B cell (primary cell): ENCODE measurements at regions of chr3 and their contacts with region 1.

Region 1: GRCh38 chr3:50611464-50612233 is at the start of gene CISH:
- DNase-seq: peak; percentile 92
- ATAC-seq: peak; percentile 76
- H3K4me3 ChIP-seq: peak within 1 kb of the TSS; percentile 30 to 86 (median 76)
- H3K4me3 Mint-ChIP-seq: peak within 1 kb of the TSS; percentile 90
- H3K27ac ChIP-seq: peak within 1 kb of the TSS; percentile 11 to 65
- H3K27ac Mint-ChIP-seq: peak within 1 kb of the TSS; percentile 80
- H3K4me1 ChIP-seq: peaks cover 24 to 37% of the 10 kb centered on the region in 2 donors
- H3K4me1 Mint-ChIP-seq: peaks cover 42% of the 10 kb centered on the region
- H3K27me3 ChIP-seq: no peaks in the 10 kb centered on the region
- H3K27me3 Mint-ChIP-seq: no peaks in the 10 kb centered on the region
- CTCF ChIP-seq: peak; percentile 61
- total RNA-seq, gene CISH: 2.3 and 2.4 TPM in 2 replicates

Region 2: GRCh38 chr3:50436114-50436674 is 175.5 kb before region 1 on chr3:
- CTCF ChIA-PET with region 1: interaction called, 5 read pairs
- POLR2A ChIA-PET with region 1: no interaction called
- intact Hi-C with region 1: loop called (anchors 5 kb)
- DNase-seq: peak; percentile 73
- ATAC-seq: peak; percentile 68
- H3K4me3 ChIP-seq: no peak overlapping the region
- H3K4me3 Mint-ChIP-seq: no peak overlapping the region
- H3K27ac ChIP-seq: no peak overlapping the region
- H3K27ac Mint-ChIP-seq: no peak overlapping the region
- H3K4me1 ChIP-seq: no peaks in the 10 kb centered on the region
- H3K4me1 Mint-ChIP-seq: no peaks in the 10 kb centered on the region
- H3K27me3 ChIP-seq: peaks cover 0 to 8% (median 1%) of the 10 kb centered on the region in 4 experiments
- H3K27me3 Mint-ChIP-seq: peaks cover 12% of the 10 kb centered on the region
- CTCF ChIP-seq: peak; percentile 80

Region 3: DNA sequence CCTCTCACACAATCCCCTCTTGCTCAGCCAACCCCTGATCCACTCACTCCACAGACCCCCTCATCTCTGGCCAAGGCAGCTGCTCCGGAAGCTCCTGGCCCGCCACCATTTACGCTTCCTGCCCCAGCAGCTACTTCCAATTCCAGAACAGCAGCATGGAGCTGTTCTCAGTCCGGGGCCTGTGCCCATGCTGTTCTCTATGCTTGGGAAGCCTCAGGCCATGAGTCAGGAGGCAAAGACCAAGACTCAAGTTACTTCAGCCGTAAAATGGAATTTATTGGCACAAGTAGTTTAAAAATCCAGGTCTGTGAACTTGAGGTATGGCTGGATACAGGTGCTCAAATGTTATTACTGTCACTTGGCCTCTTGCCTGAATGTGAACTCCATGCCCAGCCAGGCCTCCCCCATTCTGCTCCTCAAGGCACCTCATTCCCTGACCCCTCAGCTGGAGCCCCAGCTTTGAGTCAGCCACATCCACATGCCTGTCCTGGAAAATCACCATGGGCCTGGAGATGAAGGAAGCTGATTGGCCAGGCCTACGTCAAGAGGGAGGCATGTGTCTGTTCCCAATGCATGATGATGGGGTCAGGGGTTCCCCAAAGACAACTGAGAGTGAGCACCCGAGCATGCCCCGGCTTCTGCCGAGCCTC is 76.8 kb before region 1 on chr3:
- CTCF ChIA-PET with region 1: no interaction called
- POLR2A ChIA-PET with region 1: no interaction called
- intact Hi-C with region 1: no loop called
- DNase-seq: no peak
- ATAC-seq: no peak
- H3K4me3 ChIP-seq: no peak overlapping the region
- H3K4me3 Mint-ChIP-seq: no peak overlapping the region
- H3K27ac ChIP-seq: no peak overlapping the region
- H3K27ac Mint-ChIP-seq: no peak overlapping the region
- H3K4me1 ChIP-seq: no peaks in the 10 kb centered on the region
- H3K4me1 Mint-ChIP-seq: no peaks in the 10 kb centered on the region
- H3K27me3 ChIP-seq: peaks cover 0 to 25% (median 1%) of the 10 kb centered on the region in 4 experiments
- H3K27me3 Mint-ChIP-seq: peaks cover 50% of the 10 kb centered on the region
- CTCF ChIP-seq: no peak

Region 4: GRCh38 chr3:50568947-50569749 is 42.5 kb before region 1 on chr3 and contains the start of gene HEMK1:
- CTCF ChIA-PET with region 1: interaction called, 541 read pairs
- POLR2A ChIA-PET with region 1: interaction called, 38 read pairs
- intact Hi-C with region 1: loop called (anchors 1 kb)
- DNase-seq: peak; percentile 96
- ATAC-seq: peak; percentile 77
- H3K4me3 ChIP-seq: peak within 1 kb of the TSS; percentile 69 to 93 (median 80)
- H3K4me3 Mint-ChIP-seq: peak within 1 kb of the TSS; percentile 98
- H3K27ac ChIP-seq: peak within 1 kb of the TSS; percentile 77 to 82
- H3K27ac Mint-ChIP-seq: peak within 1 kb of the TSS; percentile 96
- H3K4me1 ChIP-seq: peaks cover 16 to 39% of the 10 kb centered on the region in 2 donors
- H3K4me1 Mint-ChIP-seq: peaks cover 35% of the 10 kb centered on the region
- H3K27me3 ChIP-seq: no peaks in the 10 kb centered on the region
- H3K27me3 Mint-ChIP-seq: no peaks in the 10 kb centered on the region
- CTCF ChIP-seq: no peak
- total RNA-seq, gene HEMK1: 43.0 and 43.5 TPM in 2 replicates

Region 5: GRCh38 chr3:50840983-50841489 is 229.4 kb after region 1 on chr3:
- CTCF ChIA-PET with region 1: no interaction called
- POLR2A ChIA-PET with region 1: no interaction called
- intact Hi-C with region 1: no loop called
- DNase-seq: no peak
- ATAC-seq: no peak
- H3K4me3 ChIP-seq: no peak overlapping the region
- H3K4me3 Mint-ChIP-seq: no peak overlapping the region
- H3K27ac ChIP-seq: no peak overlapping the region
- H3K27ac Mint-ChIP-seq: no peak overlapping the region
- H3K4me1 ChIP-seq: no peaks in the 10 kb centered on the region
- H3K4me1 Mint-ChIP-seq: no peaks in the 10 kb centered on the region
- H3K27me3 ChIP-seq: peaks cover 0 to 3% (median 0%) of the 10 kb centered on the region in 4 experiments
- H3K27me3 Mint-ChIP-seq: peaks cover 24% of the 10 kb centered on the region
- CTCF ChIP-seq: no peak

Region 6: GRCh38 chr3:51311055-51311454 is 699.4 kb after region 1 on chr3:
- CTCF ChIA-PET with region 1: interaction called, 44 read pairs
- POLR2A ChIA-PET with region 1: no interaction called
- intact Hi-C with region 1: no loop called
- DNase-seq: peak; percentile 32
- ATAC-seq: no peak
- H3K4me3 ChIP-seq: no peak overlapping the region
- H3K4me3 Mint-ChIP-seq: no peak overlapping the region
- H3K27ac ChIP-seq: no peak overlapping the region
- H3K27ac Mint-ChIP-seq: no peak overlapping the region
- H3K4me1 ChIP-seq: no peaks in the 10 kb centered on the region
- H3K4me1 Mint-ChIP-seq: no peaks in the 10 kb centered on the region
- H3K27me3 ChIP-seq: peaks cover 0 to 8% (median 3%) of the 10 kb centered on the region in 4 experiments
- H3K27me3 Mint-ChIP-seq: peaks cover 25% of the 10 kb centered on the region
- CTCF ChIP-seq: peak; percentile 51

Region 7: GRCh38 chr3:51384726-51385473 is 773.3 kb after region 1 on chr3 and contains the start of gene MANF:
- CTCF ChIA-PET with region 1: interaction called, 67 read pairs
- POLR2A ChIA-PET with region 1: interaction called, 3 read pairs
- intact Hi-C with region 1: loop called (anchors 1 kb)
- DNase-seq: peak; percentile 98
- ATAC-seq: peak; percentile 95
- H3K4me3 ChIP-seq: peak within 1 kb of the TSS; percentile 74 to 97 (median 87)
- H3K4me3 Mint-ChIP-seq: peak within 1 kb of the TSS; percentile 99
- H3K27ac ChIP-seq: peak within 1 kb of the TSS; percentile 82 to 95
- H3K27ac Mint-ChIP-seq: peak within 1 kb of the TSS; percentile 99
- H3K4me1 ChIP-seq: peaks cover 21 to 33% of the 10 kb centered on the region in 2 donors
- H3K4me1 Mint-ChIP-seq: peaks cover 42% of the 10 kb centered on the region
- H3K27me3 ChIP-seq: no peaks in the 10 kb centered on the region
- H3K27me3 Mint-ChIP-seq: no peaks in the 10 kb centered on the region
- CTCF ChIP-seq: no peak
- total RNA-seq, gene MANF: 28.4 and 29.7 TPM in 2 replicates

Region 8: DNA sequence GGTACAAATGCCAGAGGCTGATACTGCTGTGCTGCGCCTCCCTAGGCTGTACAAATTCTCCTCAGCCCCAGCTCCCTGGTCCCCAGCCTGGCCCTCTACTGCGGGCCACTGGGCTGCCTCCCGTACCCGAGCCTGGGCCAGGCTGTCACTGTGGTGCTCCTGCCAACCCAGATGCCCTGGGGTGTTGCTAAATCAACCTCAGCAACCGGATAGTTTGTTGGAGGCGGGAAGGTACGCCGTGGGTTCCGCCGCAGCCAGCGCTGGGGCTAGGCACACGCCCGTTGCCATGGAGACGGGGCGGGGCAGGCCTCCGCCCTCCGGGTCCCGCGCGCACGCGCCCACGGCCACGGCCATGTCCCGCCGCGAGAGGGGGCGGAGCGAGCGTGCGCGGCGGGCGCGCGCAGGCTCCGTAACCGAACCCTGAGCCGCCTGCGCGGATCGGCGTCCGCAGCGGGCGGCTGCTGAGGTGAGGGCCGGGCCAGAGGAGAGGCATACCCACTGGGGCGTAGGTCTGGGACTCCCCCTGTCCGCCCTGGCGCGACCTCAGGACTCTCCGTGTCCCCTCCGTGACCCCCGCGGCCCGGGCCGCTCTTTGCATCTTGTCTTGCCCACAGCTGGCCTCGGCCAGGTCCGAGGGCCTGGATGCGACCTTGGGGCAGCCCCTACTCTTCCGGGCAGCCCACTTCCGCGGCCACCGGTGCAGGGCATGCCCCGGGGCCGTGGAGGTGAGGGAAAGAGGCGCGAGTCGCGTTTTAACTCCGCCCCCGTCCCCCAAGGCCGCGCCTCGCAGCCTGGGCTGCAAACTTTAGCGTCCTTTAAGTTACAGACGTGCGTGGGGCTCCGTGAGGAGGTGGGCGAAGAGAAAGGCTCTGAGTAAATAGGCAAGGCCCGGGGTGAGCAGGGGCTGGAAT is 1059.4 kb after region 1 on chr3 and contains the start of gene TEX264:
- CTCF ChIA-PET with region 1: interaction called, 5 read pairs
- POLR2A ChIA-PET with region 1: no interaction called
- intact Hi-C with region 1: loop called (anchors 1 kb)
- DNase-seq: peak; percentile 97
- ATAC-seq: peak; percentile 85
- H3K4me3 ChIP-seq: peak within 1 kb of the TSS; percentile 46 to 99 (median 96)
- H3K4me3 Mint-ChIP-seq: peak within 1 kb of the TSS; percentile 91
- H3K27ac ChIP-seq: peak within 1 kb of the TSS; percentile 81 to 85
- H3K27ac Mint-ChIP-seq: peak within 1 kb of the TSS; percentile 92
- H3K4me1 ChIP-seq: peaks cover 25 to 55% of the 10 kb centered on the region in 2 donors
- H3K4me1 Mint-ChIP-seq: peaks cover 61% of the 10 kb centered on the region
- H3K27me3 ChIP-seq: no peaks in the 10 kb centered on the region
- H3K27me3 Mint-ChIP-seq: no peaks in the 10 kb centered on the region
- CTCF ChIP-seq: no peak
- total RNA-seq, gene TEX264: 31.8 and 39.1 TPM in 2 replicates